Vagina (tissue), 2 donors: ENCODE measurements at regions of chr11 and their contacts with region 1.

Region 1: DNA sequence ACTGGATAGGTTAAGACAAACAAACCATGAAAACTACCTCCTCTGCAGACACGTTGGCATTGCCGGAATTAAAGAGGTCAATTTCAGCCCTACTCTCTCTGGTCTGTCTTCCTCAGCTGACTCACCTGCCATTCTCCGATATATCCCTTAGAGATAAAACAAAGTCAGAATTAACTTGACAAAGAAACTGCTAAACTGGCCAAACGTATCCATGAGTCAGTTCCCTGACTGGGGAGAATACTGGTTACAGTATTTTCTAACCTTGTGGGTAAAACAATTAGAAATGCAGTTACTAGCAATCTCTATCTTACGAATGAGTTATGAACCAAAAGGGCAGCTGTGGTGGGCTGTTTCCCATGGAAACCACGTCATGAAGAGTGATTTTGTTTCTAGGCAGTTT is 96.2 kb downstream of the RDX start:
- DNase-seq: no peak
- H3K4me3 ChIP-seq: no peak overlapping the region
- H3K27ac ChIP-seq: no peak overlapping the region
- H3K4me1 ChIP-seq: no peaks in the 10 kb centered on the region
- H3K27me3 ChIP-seq: no peaks in the 10 kb centered on the region
- CTCF ChIP-seq: no peak
- POLR2A ChIP-seq: no peak

Region 2: DNA sequence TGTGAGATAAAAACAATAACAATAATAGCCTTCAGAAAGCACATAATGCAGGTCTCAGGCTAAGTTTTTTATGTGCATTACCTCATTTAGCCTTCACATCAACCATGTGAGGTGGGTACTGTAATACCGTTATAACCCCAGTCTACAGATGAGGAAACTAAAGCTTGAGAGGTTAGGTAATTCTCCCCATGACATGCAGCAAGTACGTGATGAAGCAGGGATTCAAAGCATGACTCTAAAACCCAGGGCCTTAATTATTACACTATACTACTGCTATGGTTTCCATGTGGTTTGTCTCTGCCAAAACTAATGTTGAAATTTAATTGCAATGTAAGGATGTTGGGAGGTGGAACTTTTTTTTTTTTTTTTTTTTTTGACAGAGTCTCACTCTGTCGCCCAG is 191.8 kb after region 1 on chr11:
- intact Hi-C with region 1: no loop called
- DNase-seq: no peak
- H3K4me3 ChIP-seq: no peak overlapping the region
- H3K27ac ChIP-seq: no peak overlapping the region
- H3K4me1 ChIP-seq: no peaks in the 10 kb centered on the region
- H3K27me3 ChIP-seq: no peaks in the 10 kb centered on the region
- CTCF ChIP-seq: no peak
- POLR2A ChIP-seq: no peak

Region 3: DNA sequence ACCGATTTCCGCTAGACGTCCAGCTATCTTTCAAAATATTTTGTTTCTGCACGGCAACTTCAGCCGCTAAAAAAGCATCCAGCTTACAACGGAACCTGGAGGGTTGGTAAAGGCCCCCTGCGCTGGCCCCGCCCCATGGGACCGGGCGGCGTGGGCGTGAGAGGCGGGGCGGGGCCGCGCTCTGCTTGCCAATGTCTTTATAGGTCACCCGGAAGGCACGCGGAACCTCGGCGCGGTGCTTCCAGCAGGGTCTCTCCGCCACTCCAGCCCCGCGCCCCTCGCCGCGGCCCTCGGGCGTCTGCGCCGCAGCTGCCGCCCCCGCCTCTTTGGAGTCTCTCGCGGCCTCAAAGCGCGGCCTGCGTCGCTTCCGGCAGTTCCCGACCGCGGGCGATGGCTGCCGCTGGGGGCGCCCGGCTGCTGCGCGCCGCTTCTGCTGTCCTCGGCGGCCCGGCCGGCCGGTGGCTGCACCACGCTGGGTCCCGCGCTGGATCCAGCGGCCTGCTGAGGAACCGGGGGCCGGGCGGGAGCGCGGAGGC is 229.6 kb after region 1 on chr11 and contains the start of gene FDX1:
- intact Hi-C with region 1: loop called (anchors 5 kb)
- DNase-seq: no peak
- H3K4me3 ChIP-seq: peak within 1 kb of the TSS; percentile 80 to 89
- H3K27ac ChIP-seq: peak within 1 kb of the TSS; percentile 81
- H3K4me1 ChIP-seq: peaks cover 39% of the 10 kb centered on the region
- H3K27me3 ChIP-seq: no peaks in the 10 kb centered on the region
- CTCF ChIP-seq: peak; percentile 11 to 69 (median 39)
- POLR2A ChIP-seq: peak in 1 of 2 donors; percentile 23
- total RNA-seq, gene FDX1: 9.1 TPM